ENCODE measurements at regions of chr1 and their contacts with region 1.

Region 1: DNA sequence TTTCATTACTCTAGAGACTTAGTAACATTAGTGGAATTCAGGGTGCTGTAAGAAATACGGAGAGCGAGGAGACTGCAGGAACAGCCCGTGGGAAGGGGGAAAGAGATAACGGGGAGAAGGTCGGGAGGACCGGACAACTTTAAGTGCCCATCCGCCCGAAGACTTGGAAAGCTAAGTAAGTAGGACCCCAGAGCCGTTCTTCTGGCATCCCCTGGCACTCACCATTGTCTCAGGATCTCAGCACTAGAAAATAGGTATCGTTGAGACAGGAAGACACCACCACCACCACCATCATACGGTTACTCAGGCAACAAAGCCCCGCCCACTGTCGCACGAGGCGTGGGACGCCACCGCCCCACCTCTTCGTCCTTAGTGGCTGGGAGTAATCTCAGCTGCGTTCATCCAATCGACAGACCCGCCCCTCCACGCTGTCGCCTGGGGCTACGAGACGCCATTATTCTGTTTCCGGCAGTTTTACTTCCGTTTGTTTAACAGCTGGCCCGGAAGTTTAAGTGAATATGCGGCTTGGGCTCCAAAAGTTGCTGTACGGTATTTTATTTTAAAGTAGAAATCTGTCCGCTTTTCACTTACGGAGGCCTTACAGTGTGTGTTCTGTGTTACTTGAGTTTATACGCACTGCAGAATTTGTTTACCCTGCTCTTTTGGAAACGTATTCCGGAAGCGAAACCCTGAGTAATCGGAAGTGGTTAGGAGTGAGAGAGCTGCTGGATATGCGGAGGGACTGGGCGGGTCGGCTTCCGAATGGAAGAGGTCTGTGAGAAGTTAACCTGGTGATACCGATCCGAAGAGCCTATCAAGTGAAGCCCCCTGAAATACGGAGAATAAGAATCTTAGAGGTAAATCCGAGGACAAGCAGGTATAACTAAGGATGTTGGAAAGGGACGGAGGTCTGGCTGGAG is at the starts of genes BLZF1 and NME7:
- DNase-seq: peak; percentile 97
- ATAC-seq: peak; percentile 99
- H3K4me3 ChIP-seq: peak within 1 kb of the TSS; percentile 66 to 100 (median 92)
- H3K4me3 Mint-ChIP-seq: peak within 1 kb of the TSS; percentile 42
- H3K27ac ChIP-seq: peak within 1 kb of the TSS; percentile 66 to 86
- H3K27ac Mint-ChIP-seq: no peak within 1 kb of the TSS
- H3K4me1 ChIP-seq: peaks cover 6 to 12% of the 10 kb centered on the region in 2 donors
- H3K4me1 Mint-ChIP-seq: peaks cover 12% of the 10 kb centered on the region
- H3K27me3 ChIP-seq: no peaks in the 10 kb centered on the region
- H3K27me3 Mint-ChIP-seq: no peaks in the 10 kb centered on the region
- CTCF ChIP-seq: no peak
- total RNA-seq, gene BLZF1: 20.1 and 21.3 TPM in 2 replicates
- total RNA-seq, gene NME7: 13.1 and 14.3 TPM in 2 replicates

Region 2: DNA sequence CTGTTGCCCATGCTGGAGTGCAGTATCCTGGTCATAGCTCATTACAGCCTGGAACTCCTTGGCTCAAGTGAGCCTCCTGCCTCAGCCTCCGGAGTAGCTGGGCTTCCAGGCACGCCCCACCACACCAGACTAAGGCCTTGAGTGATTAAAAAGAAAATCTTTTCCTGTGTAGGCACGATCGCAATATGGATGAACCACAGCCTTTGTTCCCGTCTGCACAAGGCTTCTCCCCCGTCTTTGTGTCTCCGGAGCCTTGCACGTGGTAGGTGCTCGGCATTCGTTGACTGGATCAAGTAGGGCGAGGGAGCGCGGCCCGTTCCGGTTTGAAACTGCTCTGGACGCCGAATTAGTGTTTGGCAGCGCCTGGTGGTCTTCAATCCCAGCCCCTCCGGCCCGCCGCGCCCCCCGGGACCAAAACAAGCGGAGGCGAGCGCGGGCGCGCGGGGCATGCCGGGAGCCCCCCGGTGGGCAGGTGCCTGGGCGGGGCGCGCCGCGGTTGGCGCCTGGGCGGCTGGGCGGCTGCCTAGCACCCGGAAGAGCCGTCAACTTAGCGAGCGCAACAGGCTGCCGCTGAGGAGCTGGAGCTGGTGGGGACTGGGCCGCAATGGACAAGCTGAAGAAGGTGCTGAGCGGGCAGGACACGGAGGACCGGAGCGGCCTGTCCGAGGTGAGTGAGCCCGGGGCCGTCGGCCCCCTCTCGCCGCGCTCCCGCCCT is 1142.1 kb before region 1 on chr1 and contains the start of gene SFT2D2:
- CTCF ChIA-PET with region 1: no interaction called
- POLR2A ChIA-PET with region 1: no interaction called
- intact Hi-C with region 1: loop called (anchors 5 kb)
- DNase-seq: peak; percentile 87
- ATAC-seq: peak; percentile 93
- H3K4me3 ChIP-seq: peak within 1 kb of the TSS; percentile 71 to 89 (median 84)
- H3K4me3 Mint-ChIP-seq: peak within 1 kb of the TSS; percentile 89
- H3K27ac ChIP-seq: peak within 1 kb of the TSS; percentile 73 to 91
- H3K27ac Mint-ChIP-seq: peak within 1 kb of the TSS; percentile 98
- H3K4me1 ChIP-seq: peaks cover 42 to 45% of the 10 kb centered on the region in 2 donors
- H3K4me1 Mint-ChIP-seq: peaks cover 49% of the 10 kb centered on the region
- H3K27me3 ChIP-seq: no peaks in the 10 kb centered on the region
- H3K27me3 Mint-ChIP-seq: peaks cover 2% of the 10 kb centered on the region
- CTCF ChIP-seq: no peak
- total RNA-seq, gene SFT2D2: 68.3 and 79.0 TPM in 2 replicates

Region 3: DNA sequence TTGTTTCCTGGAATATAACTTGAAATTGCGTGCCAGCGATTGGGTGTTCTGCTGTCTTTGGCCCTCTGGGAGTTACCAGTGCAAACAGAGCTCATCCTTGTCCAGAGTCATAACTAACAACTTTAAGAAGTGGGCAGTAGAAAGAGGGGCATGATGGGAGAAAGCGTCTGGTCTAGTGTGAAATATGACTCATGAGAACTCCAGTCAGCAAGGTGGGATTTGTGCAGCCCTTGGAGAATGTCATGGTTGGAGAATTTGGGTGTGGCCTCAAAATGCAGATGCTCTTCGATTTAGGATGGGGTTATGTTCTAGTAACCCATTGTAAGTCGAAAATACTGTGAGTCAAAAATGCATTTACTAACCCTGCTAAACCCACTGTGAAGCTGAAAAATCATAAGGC is 248.3 kb before region 1 on chr1:
- CTCF ChIA-PET with region 1: no interaction called
- POLR2A ChIA-PET with region 1: no interaction called
- intact Hi-C with region 1: no loop called
- DNase-seq: no peak
- ATAC-seq: no peak
- H3K4me3 ChIP-seq: no peak overlapping the region
- H3K4me3 Mint-ChIP-seq: no peak overlapping the region
- H3K27ac ChIP-seq: no peak overlapping the region
- H3K27ac Mint-ChIP-seq: no peak overlapping the region
- H3K4me1 ChIP-seq: peaks cover 0 to 10% of the 10 kb centered on the region in 2 donors
- H3K4me1 Mint-ChIP-seq: peaks cover 9% of the 10 kb centered on the region
- H3K27me3 ChIP-seq: no peaks in the 10 kb centered on the region
- H3K27me3 Mint-ChIP-seq: peaks cover 3% of the 10 kb centered on the region
- CTCF ChIP-seq: no peak

Region 4: GRCh38 chr1:169348383-169349036 is 19.2 kb before region 1 on chr1:
- CTCF ChIA-PET with region 1: interaction called, 13 read pairs
- POLR2A ChIA-PET with region 1: no interaction called
- intact Hi-C with region 1: no loop called
- DNase-seq: peak; percentile 68
- ATAC-seq: no peak
- H3K4me3 ChIP-seq: no peak overlapping the region
- H3K4me3 Mint-ChIP-seq: no peak overlapping the region
- H3K27ac ChIP-seq: no peak overlapping the region
- H3K27ac Mint-ChIP-seq: no peak overlapping the region
- H3K4me1 ChIP-seq: no peaks in the 10 kb centered on the region
- H3K4me1 Mint-ChIP-seq: no peaks in the 10 kb centered on the region
- H3K27me3 ChIP-seq: no peaks in the 10 kb centered on the region
- H3K27me3 Mint-ChIP-seq: no peaks in the 10 kb centered on the region
- CTCF ChIP-seq: peak; percentile 90

Region 5: DNA sequence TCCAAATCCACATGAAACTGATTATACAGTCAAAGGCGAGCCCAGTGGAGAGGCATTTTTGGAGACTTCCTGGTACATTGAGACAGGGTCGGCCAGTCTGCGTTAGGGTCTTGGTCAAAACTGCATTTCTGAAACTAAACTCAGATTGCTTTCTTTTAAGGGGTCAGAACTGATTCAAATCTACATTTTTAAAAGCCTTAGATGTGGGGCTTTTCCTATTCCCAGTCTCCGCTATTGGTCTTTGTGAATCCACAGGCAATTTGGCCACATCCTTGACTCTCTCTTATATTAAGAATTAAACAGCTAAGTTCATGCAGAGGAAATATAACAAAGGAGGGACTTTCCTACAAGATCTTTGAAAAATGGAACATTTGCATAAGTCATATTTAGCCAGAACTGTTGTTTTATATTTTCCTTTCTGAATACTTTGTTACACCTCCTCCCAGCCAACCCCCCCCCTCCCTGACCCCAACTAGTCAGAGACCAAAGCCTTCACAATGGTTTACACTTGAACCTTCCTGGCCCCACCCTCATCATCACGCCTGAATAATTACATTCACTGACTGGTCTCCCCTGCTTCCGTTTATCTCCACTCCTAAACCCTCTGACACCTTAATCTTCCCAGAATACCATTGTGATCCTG is 312.8 kb after region 1 on chr1:
- CTCF ChIA-PET with region 1: no interaction called
- POLR2A ChIA-PET with region 1: no interaction called
- intact Hi-C with region 1: loop called (anchors 2 kb)
- DNase-seq: peak; percentile 70
- ATAC-seq: peak; percentile 84
- H3K4me3 ChIP-seq: peak overlapping the region in 2 of 5 experiments; percentile 6 to 16
- H3K4me3 Mint-ChIP-seq: peak overlapping the region; percentile 75
- H3K27ac ChIP-seq: peak overlapping the region; percentile 88 to 92
- H3K27ac Mint-ChIP-seq: peak overlapping the region; percentile 95
- H3K4me1 ChIP-seq: peaks cover 84 to 96% of the 10 kb centered on the region in 2 donors
- H3K4me1 Mint-ChIP-seq: peaks cover 61% of the 10 kb centered on the region
- H3K27me3 ChIP-seq: no peaks in the 10 kb centered on the region
- H3K27me3 Mint-ChIP-seq: no peaks in the 10 kb centered on the region
- CTCF ChIP-seq: no peak

Region 6: DNA sequence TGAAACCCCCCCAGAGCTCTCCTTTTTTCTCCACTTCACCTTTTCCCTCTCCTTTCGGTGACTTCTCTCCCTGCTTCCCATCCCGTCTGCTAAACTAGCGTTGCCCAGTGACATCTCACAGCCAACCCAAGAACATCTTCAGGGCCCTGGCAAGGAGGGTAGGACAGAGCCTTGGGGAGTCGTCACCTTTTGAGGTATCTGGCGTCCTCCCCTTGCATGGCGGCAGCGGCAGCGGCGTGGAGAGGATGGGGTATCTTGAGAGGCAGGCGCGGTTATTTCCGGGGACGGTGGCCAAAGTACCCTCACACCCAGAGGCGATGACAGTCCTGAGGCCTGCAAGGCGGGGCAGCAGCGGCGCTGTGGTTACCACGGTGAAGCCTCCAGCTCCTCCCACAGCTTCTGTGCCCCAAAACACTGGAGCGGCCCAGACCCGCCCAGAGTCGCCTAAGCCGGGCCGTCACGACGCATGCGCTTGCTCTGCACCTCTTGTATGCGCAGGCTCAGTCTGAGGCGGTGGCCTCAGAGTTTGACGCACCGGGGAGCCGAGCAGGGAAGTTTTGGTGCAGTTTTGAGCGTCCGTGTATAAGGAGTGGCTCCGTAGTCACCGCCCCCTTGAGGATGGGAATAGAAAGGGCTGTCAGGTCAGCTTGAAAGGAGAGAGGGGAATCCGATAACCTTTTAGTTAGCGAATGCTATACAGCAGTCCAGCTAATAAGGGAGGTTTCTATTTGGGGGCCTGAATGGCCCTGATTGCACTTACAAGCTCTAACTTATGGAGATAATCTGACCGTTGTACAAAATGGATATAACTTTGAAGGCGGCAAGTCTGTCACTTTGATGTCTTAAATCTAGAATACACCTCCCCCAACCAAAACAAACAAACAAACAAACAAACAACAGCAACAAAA is 706.8 kb after region 1 on chr1 and contains the start of gene KIFAP3:
- CTCF ChIA-PET with region 1: no interaction called
- POLR2A ChIA-PET with region 1: no interaction called
- intact Hi-C with region 1: loop called (anchors 2 kb)
- DNase-seq: peak; percentile 98
- ATAC-seq: peak; percentile 93
- H3K4me3 ChIP-seq: peak within 1 kb of the TSS; percentile 43 to 78 (median 66)
- H3K4me3 Mint-ChIP-seq: peak within 1 kb of the TSS; percentile 92
- H3K27ac ChIP-seq: peak within 1 kb of the TSS; percentile 63 to 84
- H3K27ac Mint-ChIP-seq: peak within 1 kb of the TSS; percentile 95
- H3K4me1 ChIP-seq: peaks cover 19 to 20% of the 10 kb centered on the region in 2 donors
- H3K4me1 Mint-ChIP-seq: peaks cover 44% of the 10 kb centered on the region
- H3K27me3 ChIP-seq: no peaks in the 10 kb centered on the region
- H3K27me3 Mint-ChIP-seq: peaks cover 11% of the 10 kb centered on the region
- CTCF ChIP-seq: peak; percentile 52
- total RNA-seq, gene KIFAP3: 14.1 and 14.9 TPM in 2 replicates

Measured in B cell (primary cell).